Esophagus muscularis mucosa (tissue), 4 donors: ENCODE measurements at regions of chr6 and their contacts with region 1.

Region 1: DNA sequence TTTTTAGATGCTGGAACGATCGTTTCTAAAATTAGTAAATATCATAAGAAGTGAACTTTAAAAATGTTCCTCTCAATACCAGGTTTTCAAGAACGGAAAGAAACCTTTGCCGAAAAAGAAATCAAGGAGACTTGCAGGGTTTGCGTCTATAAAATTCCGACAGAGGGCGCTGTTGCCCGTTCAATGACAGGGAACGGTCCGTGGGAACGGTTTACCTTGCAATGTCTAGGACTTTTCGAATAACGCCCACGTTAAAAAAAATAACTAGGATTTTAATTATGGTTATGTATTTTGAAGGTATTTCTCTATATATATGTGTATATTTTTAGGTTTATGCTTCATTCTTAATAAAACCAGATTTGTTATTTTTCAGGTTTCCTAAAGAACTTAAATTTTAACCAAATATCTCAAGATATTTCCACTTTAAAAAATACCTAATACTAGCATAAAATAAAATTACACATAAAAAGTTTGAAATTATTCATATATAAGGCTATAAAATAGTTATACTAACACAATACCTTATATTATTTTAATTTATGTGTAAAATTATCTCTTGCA is 2.5 kb upstream of the TFAP2B start:
- DNase-seq: no peak
- H3K4me3 ChIP-seq: peak overlapping the region; percentile 38 to 53 (median 45)
- H3K27ac ChIP-seq: no peak overlapping the region
- H3K4me1 ChIP-seq: peaks cover 10 to 24% (median 23%) of the 10 kb centered on the region in 4 donors
- H3K27me3 ChIP-seq: peaks cover 0 to 91% (median 35%) of the 10 kb centered on the region in 4 donors
- CTCF ChIP-seq: peak; percentile 71 to 78 (median 72)
- EP300 ChIP-seq: no peak
- POLR2A ChIP-seq: no peak

Region 2: GRCh38 chr6:50778696-50779095 is 37.5 kb before region 1 on chr6:
- intact Hi-C with region 1: no loop called
- DNase-seq: no peak
- H3K4me3 ChIP-seq: no peak overlapping the region
- H3K27ac ChIP-seq: no peak overlapping the region
- H3K4me1 ChIP-seq: no peaks in the 10 kb centered on the region
- H3K27me3 ChIP-seq: peaks cover 0 to 5% (median 0%) of the 10 kb centered on the region in 4 donors
- CTCF ChIP-seq: no peak
- EP300 ChIP-seq: no peak
- POLR2A ChIP-seq: no peak

Region 3: DNA sequence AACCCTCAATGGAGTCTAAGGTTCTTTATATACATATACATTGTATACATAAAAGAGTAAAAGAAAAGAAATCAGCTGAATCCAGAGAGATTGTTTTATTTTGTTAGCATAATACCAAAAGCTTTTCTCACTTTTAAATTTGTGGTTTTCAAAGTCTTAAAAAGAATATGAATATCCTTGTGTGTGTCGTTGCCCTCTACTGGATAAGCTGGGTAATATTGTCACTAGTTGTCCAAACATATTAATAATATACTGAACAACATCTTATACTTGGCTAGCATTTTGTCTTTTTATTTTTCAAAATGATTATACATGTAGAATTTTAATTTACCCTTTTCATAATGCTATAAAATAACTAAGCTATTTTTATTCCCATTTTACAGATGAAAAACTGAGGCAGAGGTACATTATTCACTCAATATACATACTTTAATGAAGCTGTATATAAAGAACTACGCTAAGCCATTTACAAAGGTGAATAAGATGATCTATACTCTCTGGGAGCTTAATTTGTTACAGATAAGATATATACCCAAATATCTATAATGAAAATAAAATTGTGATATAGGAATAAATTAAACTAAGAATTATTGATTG is 534.2 kb after region 1 on chr6:
- intact Hi-C with region 1: loop called (anchors 5 kb)
- DNase-seq: no peak
- H3K4me3 ChIP-seq: no peak overlapping the region
- H3K27ac ChIP-seq: no peak overlapping the region
- H3K4me1 ChIP-seq: no peaks in the 10 kb centered on the region
- H3K27me3 ChIP-seq: no peaks in the 10 kb centered on the region
- CTCF ChIP-seq: peak in 1 of 3 experiments; percentile 16
- EP300 ChIP-seq: no peak
- POLR2A ChIP-seq: no peak

Region 4: DNA sequence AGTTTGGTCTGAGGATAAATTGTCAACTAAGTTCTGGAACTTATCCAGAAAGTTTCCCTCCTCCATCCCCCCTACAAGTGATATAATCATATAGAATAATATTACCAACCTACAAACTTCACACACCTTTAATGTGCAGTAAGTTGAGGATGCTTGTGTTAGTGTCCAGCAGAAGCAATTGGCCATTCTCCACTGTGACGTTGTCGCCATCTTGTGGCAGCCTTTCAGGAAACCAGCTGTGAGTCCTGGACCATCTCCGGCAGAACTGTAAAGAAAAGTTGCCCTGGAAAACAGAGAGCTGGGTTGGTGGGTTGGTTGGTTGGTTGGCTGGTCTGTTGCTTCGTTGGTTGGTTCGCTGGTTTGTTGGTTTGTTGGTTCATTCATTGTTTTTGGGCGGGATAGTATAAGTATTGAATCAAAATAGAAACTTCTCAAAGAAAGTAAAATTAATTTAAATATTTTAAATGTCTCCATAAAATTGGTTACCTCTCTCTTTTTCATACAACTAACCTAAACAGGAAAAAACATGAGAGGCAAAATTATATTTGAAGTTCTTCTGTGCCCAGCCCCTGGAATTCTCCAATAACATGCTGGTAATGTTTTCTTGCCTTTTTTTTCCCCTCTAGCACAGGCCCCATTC is 1143.7 kb after region 1 on chr6:
- intact Hi-C with region 1: loop called (anchors 5 kb)
- DNase-seq: peak; percentile 70
- H3K4me3 ChIP-seq: no peak overlapping the region
- H3K27ac ChIP-seq: no peak overlapping the region
- H3K4me1 ChIP-seq: no peaks in the 10 kb centered on the region
- H3K27me3 ChIP-seq: no peaks in the 10 kb centered on the region
- CTCF ChIP-seq: peak; percentile 46 to 60 (median 55)
- EP300 ChIP-seq: no peak
- POLR2A ChIP-seq: no peak

Region 5: GRCh38 chr6:52020945-52021570 is 1204.9 kb after region 1 on chr6:
- intact Hi-C with region 1: loop called (anchors 5 kb)
- DNase-seq: no peak
- H3K4me3 ChIP-seq: no peak overlapping the region
- H3K27ac ChIP-seq: no peak overlapping the region
- H3K4me1 ChIP-seq: no peaks in the 10 kb centered on the region
- H3K27me3 ChIP-seq: peaks cover 0 to 18% (median 0%) of the 10 kb centered on the region in 4 donors
- CTCF ChIP-seq: peak; percentile 72 to 80 (median 77)
- EP300 ChIP-seq: no peak
- POLR2A ChIP-seq: no peak